Sciatic nerve (tissue), 2 donors: ENCODE measurements at regions of chrX and their contacts with region 1.

Region 1: DNA sequence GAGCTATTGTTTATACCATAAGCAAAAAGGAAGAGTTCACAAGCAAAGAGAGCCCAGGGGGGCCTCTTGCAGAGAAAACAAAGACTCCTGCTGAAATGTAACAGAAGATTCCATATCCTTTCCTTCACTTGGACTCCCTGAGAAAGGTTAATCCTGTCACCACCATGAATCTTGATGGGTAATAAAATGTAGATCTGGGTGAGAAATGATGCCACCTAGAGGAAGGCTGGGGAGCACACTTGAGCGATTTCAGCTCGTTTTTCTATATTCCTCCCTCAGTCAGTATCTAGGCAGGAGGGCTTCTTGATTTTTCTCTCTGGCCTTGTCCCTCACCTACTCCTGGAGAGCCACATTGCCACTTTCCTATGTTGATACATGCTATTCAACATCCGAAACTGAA is 10.2 kb upstream of the KCNE5 start:
- DNase-seq: no peak
- ATAC-seq: no peak

Region 2: DNA sequence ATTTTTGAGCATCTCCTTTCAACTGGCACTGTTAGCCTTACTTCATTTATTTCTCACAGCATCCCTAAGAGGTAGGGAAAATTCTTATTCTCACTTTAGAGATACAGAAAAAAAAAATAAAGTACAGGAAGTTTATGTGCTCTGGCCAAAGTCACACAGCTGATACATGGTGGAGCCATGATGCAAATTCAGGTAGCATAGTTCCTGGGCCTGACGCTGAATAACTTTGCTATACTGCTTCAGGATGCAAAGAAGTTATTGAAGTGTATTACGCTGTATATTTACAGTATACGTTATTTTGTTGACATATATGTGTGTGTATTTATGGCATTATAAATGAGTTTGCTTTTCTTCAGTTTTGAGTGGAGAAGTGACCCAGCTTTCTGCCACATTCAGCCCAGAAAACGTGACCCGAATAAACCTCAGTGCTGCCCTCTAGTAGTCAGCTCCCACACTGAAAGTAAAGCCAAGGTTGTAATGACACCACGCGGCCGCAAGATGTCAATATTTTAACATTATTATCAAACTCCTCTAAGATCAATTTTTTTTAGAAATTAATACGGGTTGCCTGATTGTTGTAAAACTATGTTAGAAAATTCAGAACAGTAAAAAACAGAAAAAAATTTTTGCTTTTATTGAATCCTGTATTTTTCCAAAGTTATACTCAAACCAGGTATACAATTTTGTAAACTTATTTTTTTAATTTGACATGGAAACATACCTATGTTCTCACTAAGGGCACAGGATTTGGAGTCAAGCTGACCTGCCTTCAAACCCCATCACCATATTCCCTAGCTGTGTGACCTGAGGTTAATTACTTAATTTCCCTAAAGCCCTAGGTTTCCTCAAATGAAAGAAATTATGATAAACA is 149.5 kb before region 1 on chrX:
- intact Hi-C with region 1: loop called (anchors 10 kb)
- DNase-seq: peak; percentile 65
- ATAC-seq: peak; percentile 55